B cell (primary cell): ENCODE measurements at regions of chr17 and their contacts with region 1.

Region 1: GRCh38 chr17:7650509-7651096 is at the start of gene ATP1B2:
- DNase-seq: peak; percentile 87
- ATAC-seq: peak; percentile 85
- H3K4me3 ChIP-seq: peak within 1 kb of the TSS; percentile 26 to 74 (median 47)
- H3K4me3 Mint-ChIP-seq: peak within 1 kb of the TSS; percentile 91
- H3K27ac ChIP-seq: no peak within 1 kb of the TSS
- H3K27ac Mint-ChIP-seq: peak within 1 kb of the TSS; percentile 20
- H3K4me1 ChIP-seq: peaks cover 20 to 24% of the 10 kb centered on the region in 2 donors
- H3K4me1 Mint-ChIP-seq: peaks cover 19% of the 10 kb centered on the region
- H3K27me3 ChIP-seq: peaks cover 0 to 53% (median 29%) of the 10 kb centered on the region in 4 experiments
- H3K27me3 Mint-ChIP-seq: peaks cover 49% of the 10 kb centered on the region
- CTCF ChIP-seq: no peak
- total RNA-seq, gene ATP1B2: 0.27 and 0.39 TPM in 2 replicates

Region 2: DNA sequence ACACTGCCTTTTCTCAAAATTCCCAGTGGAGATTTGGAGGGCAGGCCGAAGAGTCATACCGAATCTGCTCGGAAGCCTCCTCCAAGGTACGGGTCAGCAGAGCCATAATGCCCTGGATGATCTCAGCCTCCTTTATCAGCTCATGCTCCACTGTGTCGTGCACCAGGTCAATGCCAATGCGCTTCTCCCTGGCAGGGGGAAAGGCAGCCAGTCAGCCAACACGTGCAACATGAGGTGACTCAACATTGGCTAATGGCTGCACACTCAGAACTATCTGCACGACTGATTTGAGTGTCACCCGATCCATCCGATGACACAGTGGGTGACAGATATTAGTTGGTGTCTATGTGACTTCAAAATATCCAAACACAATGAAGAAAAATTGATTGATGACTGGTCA is 834.8 kb before region 1 on chr17:
- CTCF ChIA-PET with region 1: no interaction called
- POLR2A ChIA-PET with region 1: no interaction called
- intact Hi-C with region 1: no loop called
- DNase-seq: no peak
- ATAC-seq: no peak
- H3K4me3 ChIP-seq: no peak overlapping the region
- H3K4me3 Mint-ChIP-seq: no peak overlapping the region
- H3K27ac ChIP-seq: no peak overlapping the region
- H3K27ac Mint-ChIP-seq: no peak overlapping the region
- H3K4me1 ChIP-seq: no peaks in the 10 kb centered on the region
- H3K4me1 Mint-ChIP-seq: no peaks in the 10 kb centered on the region
- H3K27me3 ChIP-seq: peaks cover 0 to 6% (median 1%) of the 10 kb centered on the region in 4 experiments
- H3K27me3 Mint-ChIP-seq: peaks cover 28% of the 10 kb centered on the region
- CTCF ChIP-seq: no peak

Region 3: DNA sequence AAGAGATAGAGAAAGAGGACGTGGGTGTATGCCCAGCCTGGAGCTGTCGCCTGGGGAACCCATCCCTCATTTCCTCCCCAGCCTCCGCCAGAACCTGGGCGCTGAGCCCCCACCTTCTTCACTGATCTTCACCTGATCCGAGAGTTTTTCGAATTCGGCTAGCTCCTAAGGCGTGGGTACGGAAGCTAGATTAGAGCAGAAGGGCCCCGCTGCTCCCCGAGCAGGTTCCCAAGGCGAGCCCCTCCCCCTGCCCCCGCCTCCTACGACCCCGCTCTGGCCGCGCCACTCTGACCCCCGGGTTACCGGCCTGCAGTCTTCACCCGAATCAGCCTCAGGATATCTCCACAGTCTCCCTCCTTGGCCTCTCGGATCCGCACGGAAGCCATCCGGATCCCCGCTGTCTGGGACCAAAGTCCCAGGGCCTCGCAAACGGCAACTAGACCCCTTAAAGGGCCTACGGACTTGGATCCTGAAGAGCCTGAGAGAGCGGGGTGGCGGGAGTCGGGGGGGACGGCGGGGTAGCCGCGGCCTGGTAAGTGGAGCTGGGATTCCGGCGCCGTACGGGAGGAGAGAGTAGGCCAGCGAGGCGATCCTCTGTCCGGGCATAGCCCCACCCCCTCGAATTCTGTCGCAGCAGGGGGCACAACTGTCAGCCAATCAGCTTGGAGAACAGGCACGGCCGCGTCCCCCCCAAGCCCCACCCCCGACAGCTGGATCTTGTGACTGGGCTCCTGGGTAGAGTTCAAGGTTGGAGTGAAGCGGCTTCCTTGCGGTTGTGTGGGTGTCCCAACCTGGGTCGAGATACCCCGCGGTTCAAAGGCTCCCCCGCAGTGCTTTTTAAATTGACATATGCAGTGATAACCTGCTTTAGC is 23.1 kb before region 1 on chr17 and contains the start of gene SAT2:
- CTCF ChIA-PET with region 1: interaction called, 9 read pairs
- POLR2A ChIA-PET with region 1: interaction called, 3 read pairs
- intact Hi-C with region 1: loop called (anchors 1 kb)
- DNase-seq: peak; percentile 92
- ATAC-seq: peak; percentile 99
- H3K4me3 ChIP-seq: peak within 1 kb of the TSS; percentile 55 to 97 (median 89)
- H3K4me3 Mint-ChIP-seq: peak within 1 kb of the TSS; percentile 93
- H3K27ac ChIP-seq: peak within 1 kb of the TSS; percentile 79 to 88
- H3K27ac Mint-ChIP-seq: peak within 1 kb of the TSS; percentile 92
- H3K4me1 ChIP-seq: peaks cover 6 to 14% of the 10 kb centered on the region in 2 donors
- H3K4me1 Mint-ChIP-seq: peaks cover 17% of the 10 kb centered on the region
- H3K27me3 ChIP-seq: no peaks in the 10 kb centered on the region
- H3K27me3 Mint-ChIP-seq: no peaks in the 10 kb centered on the region
- CTCF ChIP-seq: no peak
- total RNA-seq, gene SAT2: 68.8 and 83.6 TPM in 2 replicates